GM12878 (cell line): ENCODE measurements at regions of chr7 and their contacts with region 1.

Region 1: DNA sequence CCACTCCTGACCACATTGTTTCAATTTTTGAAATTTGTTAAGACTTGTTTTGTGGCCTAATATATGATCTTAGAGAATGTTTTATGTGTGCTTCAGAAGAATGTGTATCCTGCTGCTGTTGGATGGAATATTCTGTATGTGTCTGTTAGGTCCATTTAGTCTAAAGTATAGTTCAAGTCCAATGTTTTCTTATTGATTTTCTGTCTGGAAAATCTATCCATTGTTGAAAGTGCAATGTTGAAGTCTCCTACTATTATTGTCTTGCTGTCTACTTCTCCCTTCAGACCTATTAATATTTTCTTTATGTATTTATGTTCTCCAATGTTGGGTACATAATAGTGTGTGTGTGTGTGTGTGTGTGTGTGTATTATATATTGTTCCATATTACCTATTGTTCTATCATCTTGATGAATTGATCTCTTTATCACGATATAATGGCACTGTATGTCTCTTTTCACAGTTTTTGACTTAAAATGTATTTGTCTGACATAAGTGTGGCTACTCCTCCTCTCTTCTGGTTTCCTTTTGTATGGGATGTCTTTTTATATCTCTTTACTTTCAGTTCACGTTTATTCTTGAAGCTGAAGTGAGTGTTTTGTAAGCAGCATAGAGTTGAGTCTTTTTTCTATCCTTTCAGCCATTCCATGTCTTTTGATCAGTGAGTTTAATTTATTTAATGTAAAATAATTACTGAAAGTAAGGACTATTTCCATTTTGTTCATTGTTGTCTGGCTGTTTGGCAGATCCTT is 61.3 kb downstream of the AKR1D1 start:
- DNase-seq: peak; percentile 23
- ATAC-seq: peak; percentile 83
- H3K4me3 ChIP-seq: no peak overlapping the region
- H3K27ac ChIP-seq: peak overlapping the region; percentile 51
- H3K4me1 ChIP-seq: peaks cover 6% of the 10 kb centered on the region; the same call in 1 of the 2 replicates
- H3K27me3 ChIP-seq: no peaks in the 10 kb centered on the region
- CTCF ChIP-seq: no peak
- EP300 ChIP-seq: no peak
- POLR2A ChIP-seq: no peak
- RAD21 ChIP-seq: no peak

Region 2: DNA sequence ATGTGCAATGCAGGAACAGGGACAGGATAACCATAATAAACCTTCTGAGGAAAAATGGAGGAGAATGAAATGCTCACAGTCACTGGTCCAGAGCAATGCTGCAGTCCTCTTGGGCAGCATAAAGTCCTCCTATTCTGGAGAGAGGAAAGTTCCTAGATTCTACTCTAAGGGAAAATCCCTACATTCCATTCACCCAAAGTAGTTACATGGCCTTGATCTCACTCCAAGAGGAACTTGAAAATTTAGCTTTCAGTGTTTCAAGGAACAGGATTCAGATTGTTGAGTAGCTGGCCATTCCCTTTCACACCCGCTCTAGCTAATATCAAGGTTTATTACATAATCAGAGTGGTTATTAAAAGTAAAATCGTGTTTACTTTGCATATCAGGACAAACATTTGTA is 1100.8 kb before region 1 on chr7:
- CTCF ChIA-PET with region 1: no interaction called
- POLR2A ChIA-PET with region 1: no interaction called
- RAD21 ChIA-PET with region 1: no interaction called
- SMC1A ChIA-PET with region 1: no interaction called
- in situ Hi-C with region 1: no loop called
- intact Hi-C with region 1: no loop called
- DNase-seq: no peak
- ATAC-seq: no peak
- H3K4me3 ChIP-seq: no peak overlapping the region
- H3K27ac ChIP-seq: no peak overlapping the region
- H3K4me1 ChIP-seq: no peaks in the 10 kb centered on the region
- H3K27me3 ChIP-seq: no peaks in the 10 kb centered on the region
- CTCF ChIP-seq: no peak
- EP300 ChIP-seq: no peak
- POLR2A ChIP-seq: no peak
- RAD21 ChIP-seq: no peak

Region 3: DNA sequence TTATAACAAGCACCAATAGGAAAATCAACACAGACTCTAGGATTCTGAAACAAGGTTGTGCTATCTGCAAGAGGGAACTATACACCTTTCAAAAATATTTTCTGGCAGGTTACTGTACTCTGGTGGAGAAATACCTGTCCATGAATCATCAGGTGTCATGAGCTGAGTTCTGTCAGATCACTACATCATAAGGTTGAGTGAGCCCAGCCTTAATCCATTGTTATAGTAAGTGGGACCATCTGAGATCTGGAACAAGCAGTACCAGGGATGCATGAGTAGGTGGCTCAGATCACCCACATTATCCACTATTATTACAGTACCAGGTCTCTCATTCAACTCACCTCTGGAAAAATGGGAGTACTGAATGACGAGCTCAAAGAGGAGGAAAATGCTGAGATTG is 503.2 kb before region 1 on chr7:
- CTCF ChIA-PET with region 1: no interaction called
- POLR2A ChIA-PET with region 1: interaction called, 10 read pairs
- RAD21 ChIA-PET with region 1: no interaction called
- SMC1A ChIA-PET with region 1: no interaction called
- in situ Hi-C with region 1: no loop called
- intact Hi-C with region 1: no loop called
- DNase-seq: no peak
- ATAC-seq: no peak
- H3K4me3 ChIP-seq: no peak overlapping the region
- H3K27ac ChIP-seq: no peak overlapping the region
- H3K4me1 ChIP-seq: no peaks in the 10 kb centered on the region
- H3K27me3 ChIP-seq: no peaks in the 10 kb centered on the region
- CTCF ChIP-seq: no peak
- EP300 ChIP-seq: no peak
- POLR2A ChIP-seq: no peak
- RAD21 ChIP-seq: no peak

Region 4: DNA sequence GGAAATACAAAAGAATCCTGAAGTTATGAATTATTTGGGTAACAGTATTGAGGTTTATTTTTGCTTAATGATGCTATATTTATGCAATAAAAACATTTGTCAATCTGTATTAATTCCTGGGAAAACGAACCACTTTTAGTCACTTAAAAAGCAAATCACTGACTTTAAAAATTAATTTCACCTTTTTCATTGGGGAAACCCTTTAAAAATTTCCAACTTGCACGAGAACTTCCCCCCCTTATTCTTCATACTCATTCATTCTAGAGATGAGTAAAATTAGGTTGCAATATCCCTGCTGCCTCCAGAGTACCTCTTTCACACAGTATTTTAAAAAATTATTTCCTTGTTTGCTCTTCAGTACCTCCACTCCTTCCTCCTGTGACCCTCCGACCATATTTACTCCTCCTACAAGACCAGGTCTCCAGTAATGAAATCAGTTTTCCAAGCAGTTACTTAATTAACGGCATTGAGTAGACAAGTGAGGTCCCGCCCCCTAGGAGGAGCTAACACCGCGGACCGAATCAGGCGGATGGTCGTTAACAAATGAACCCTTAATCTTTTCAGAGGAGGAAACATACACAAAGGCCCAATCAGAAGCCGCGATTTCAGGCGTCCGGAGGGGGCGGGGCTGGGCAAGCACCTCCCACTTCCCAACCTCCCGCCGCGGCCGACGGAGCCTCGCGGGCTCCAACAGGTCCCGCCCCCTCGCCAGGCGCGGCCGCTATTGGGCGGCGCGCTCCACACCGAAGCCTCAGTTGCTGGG is 322.0 kb after region 1 on chr7:
- CTCF ChIA-PET with region 1: no interaction called
- POLR2A ChIA-PET with region 1: no interaction called
- RAD21 ChIA-PET with region 1: no interaction called
- SMC1A ChIA-PET with region 1: no interaction called
- in situ Hi-C with region 1: no loop called
- intact Hi-C with region 1: no loop called
- DNase-seq: peak; percentile 92
- ATAC-seq: peak; percentile 89
- H3K4me3 ChIP-seq: peak overlapping the region; percentile 48; the same call in 1 of the 2 replicates
- H3K27ac ChIP-seq: peak overlapping the region; percentile 55
- H3K4me1 ChIP-seq: no peaks in the 10 kb centered on the region
- H3K27me3 ChIP-seq: no peaks in the 10 kb centered on the region
- CTCF ChIP-seq: peak in 2 of 3 experiments; percentile 4 to 23; a peak in 1 of 6 replicates
- EP300 ChIP-seq: no peak
- POLR2A ChIP-seq: no peak
- RAD21 ChIP-seq: 0 out of 2 replicates have a peak, but pooled peaks have one; percentile 1